Aorta (tissue), 5 donors: ENCODE measurements at regions of chr18 and their contacts with region 1.

Region 1: GRCh38 chr18:63207143-63207790 is 112.3 kb downstream of the BCL2 start:
- DNase-seq: no peak
- ATAC-seq: peak; percentile 6
- H3K4me3 ChIP-seq: no peak overlapping the region
- H3K27ac ChIP-seq: peak overlapping the region; percentile 3 to 23
- H3K4me1 ChIP-seq: no peaks in the 10 kb centered on the region
- H3K27me3 ChIP-seq: no peaks in the 10 kb centered on the region

Region 2: DNA sequence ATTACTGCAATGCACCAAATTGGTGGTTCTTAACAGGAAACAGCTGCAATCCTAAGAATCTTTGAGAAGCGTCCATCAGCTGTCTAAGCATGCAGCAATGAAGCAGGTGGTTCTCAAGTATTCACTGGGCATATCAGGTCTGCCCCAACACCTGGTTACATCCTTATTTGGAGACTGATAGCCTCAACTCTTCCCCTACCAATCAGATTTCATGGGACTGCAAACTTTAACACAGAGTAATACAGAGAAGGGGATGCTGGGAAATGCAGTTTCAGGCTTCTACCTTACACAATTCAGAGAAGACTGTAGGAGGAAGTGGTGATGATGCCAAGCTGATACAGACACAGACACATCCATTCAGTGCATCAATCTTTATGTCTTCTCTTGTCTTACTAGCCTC is 128.2 kb before region 1 on chr18:
- intact Hi-C with region 1: no loop called
- DNase-seq: no peak
- ATAC-seq: no peak
- H3K4me3 ChIP-seq: no peak overlapping the region
- H3K27ac ChIP-seq: no peak overlapping the region
- H3K4me1 ChIP-seq: no peaks in the 10 kb centered on the region
- H3K27me3 ChIP-seq: peaks cover 0 to 1% of the 10 kb centered on the region in 2 donors

Region 3: GRCh38 chr18:63148449-63149301 is 58.6 kb before region 1 on chr18:
- intact Hi-C with region 1: loop called in 1 of 2 experiments (anchors 5 kb)
- DNase-seq: no peak
- ATAC-seq: peak; percentile 33
- H3K4me3 ChIP-seq: no peak overlapping the region
- H3K27ac ChIP-seq: no peak overlapping the region
- H3K4me1 ChIP-seq: peaks cover 1 to 6% of the 10 kb centered on the region in 2 donors
- H3K27me3 ChIP-seq: no peaks in the 10 kb centered on the region